Panc1 (cell line): ENCODE measurements at regions of chr2 and their contacts with region 1.

Region 1: GRCh38 chr2:28442328-28442727 is 49.7 kb downstream of the FOSL2 start:
- DNase-seq: no peak
- ATAC-seq: no peak
- H3K4me3 ChIP-seq: no peak overlapping the region
- H3K27ac ChIP-seq: no peak overlapping the region
- H3K4me1 ChIP-seq: peaks cover 5% of the 10 kb centered on the region; the same call in 1 of the 2 replicates
- H3K27me3 ChIP-seq: no peaks in the 10 kb centered on the region
- CTCF ChIP-seq: no peak

Region 2: DNA sequence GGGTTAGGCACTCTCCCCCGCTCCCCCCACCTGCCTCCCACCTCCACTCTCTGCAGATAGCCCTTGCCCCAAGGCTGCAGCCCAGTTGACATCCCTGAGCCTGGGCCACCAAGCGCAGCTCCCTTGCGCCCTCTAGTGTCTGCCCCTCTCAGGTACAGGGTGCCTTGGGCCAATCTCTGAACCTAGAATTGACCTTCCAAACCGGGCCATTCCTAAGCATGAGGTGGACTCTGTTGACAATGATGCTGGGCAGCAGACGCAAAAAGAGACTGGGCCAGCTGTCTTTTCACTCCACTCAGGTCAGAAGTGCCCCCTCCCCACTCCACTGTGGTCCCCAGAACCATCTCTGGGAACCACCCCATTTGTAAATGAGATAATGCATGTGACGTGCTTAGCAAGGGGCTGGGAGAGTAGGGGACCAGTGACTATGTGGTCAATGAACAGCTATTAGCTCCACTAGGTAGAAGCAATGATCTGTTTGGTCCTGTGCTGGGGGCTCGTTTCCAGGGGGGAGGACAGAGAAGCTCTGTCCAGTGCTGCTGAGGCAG is 10.3 kb after region 1 on chr2:
- CTCF ChIA-PET with region 1: interaction called, 14 read pairs
- POLR2A ChIA-PET with region 1: no interaction called
- in situ Hi-C with region 1: no loop called
- intact Hi-C with region 1: no loop called
- DNase-seq: peak; percentile 54
- ATAC-seq: peak; percentile 91
- H3K4me3 ChIP-seq: no peak overlapping the region
- H3K27ac ChIP-seq: no peak overlapping the region
- H3K4me1 ChIP-seq: no peaks in the 10 kb centered on the region
- H3K27me3 ChIP-seq: no peaks in the 10 kb centered on the region
- CTCF ChIP-seq: peak; percentile 95

Region 3: DNA sequence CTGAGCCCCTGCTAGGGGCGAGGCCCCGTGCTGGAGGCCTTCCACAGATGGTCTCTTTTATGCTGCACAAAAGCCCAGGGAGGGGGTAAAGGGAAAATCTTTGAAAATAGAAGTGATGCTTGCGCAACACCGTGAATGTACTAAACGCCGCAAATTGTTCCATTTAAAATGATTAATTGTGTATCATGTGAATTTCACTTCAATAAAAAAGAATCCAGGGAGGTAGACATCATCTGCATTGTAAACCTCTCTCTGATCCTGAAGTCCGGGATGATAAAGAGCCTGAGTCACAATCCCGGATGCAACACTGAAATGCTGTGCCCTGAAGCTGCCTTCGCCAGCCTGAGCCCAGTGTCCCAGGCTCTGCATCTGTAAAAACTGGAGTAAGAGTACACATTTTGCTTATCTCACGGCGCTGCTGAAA is 201.6 kb after region 1 on chr2:
- CTCF ChIA-PET with region 1: no interaction called
- POLR2A ChIA-PET with region 1: no interaction called
- in situ Hi-C with region 1: no loop called
- intact Hi-C with region 1: no loop called
- DNase-seq: no peak
- ATAC-seq: no peak
- H3K4me3 ChIP-seq: no peak overlapping the region
- H3K27ac ChIP-seq: no peak overlapping the region
- H3K4me1 ChIP-seq: no peaks in the 10 kb centered on the region
- H3K27me3 ChIP-seq: no peaks in the 10 kb centered on the region
- CTCF ChIP-seq: no peak

Region 4: GRCh38 chr2:29097569-29097968 is 655.2 kb after region 1 on chr2:
- CTCF ChIA-PET with region 1: no interaction called
- POLR2A ChIA-PET with region 1: no interaction called
- in situ Hi-C with region 1: no loop called
- intact Hi-C with region 1: no loop called
- DNase-seq: no peak
- ATAC-seq: no peak
- H3K4me3 ChIP-seq: no peak overlapping the region
- H3K27ac ChIP-seq: no peak overlapping the region
- H3K4me1 ChIP-seq: no peaks in the 10 kb centered on the region
- H3K27me3 ChIP-seq: no peaks in the 10 kb centered on the region
- CTCF ChIP-seq: no peak